Endothelial cell of umbilical vein (primary cell): ENCODE measurements at regions of chr3 and their contacts with region 1.

Region 1: DNA sequence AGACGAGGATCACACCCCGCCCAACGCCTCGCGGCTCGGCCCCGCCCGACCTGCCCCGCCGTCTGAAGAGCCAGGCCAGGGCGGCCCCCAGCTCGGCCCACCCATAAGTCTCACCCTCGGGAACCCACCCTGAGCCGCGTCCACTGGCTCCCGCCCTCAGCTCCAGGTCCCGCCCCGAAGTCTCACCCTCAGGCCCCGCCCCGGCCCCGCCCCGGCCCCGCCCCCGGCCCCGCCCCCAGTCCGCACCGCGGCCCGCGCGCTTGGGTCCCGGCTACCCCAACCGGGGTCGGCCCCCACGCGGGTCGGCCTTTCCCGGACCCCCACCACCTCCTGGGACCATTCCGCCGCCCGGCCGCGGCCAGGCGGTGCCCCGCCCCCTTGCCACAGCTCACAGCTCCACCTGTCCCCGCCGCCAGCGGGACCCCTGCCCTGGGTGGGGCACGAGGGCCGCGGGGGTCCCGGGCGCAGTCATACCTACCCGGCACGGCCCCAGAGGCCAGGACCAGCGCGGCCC is 489 bp downstream of the CSPG5 start:
- DNase-seq: no peak
- H3K4me3 ChIP-seq: peak overlapping the region; percentile 23 to 36 (median 24)
- H3K27ac ChIP-seq: no peak overlapping the region
- H3K4me1 ChIP-seq: no peaks in the 10 kb centered on the region
- H3K27me3 ChIP-seq: peaks cover 17% of the 10 kb centered on the region in 2 experiments
- CTCF ChIP-seq: no peak
- POLR2A ChIP-seq: no peak

Region 2: DNA sequence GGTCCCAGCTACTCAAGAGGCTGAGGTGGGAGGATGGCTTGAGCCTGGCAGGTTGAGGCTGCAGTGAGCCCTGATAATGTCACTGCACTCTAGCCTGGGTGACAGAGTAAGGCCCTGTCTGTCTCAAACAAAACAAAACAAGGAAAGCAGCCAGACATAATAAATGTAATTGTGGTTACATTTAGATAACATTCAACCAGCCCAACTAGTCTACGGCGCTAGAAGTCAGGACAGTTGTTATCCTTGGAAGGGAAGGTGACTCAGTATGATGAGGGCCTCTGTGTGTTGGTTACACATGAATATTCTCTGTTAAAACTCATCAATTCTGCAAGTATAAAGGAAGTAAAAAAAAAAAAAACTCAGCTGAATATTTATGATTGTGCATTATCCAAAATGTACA is 27.5 kb after region 1 on chr3:
- CTCF ChIA-PET with region 1: no interaction called
- POLR2A ChIA-PET with region 1: no interaction called
- dilution Hi-C with region 1: no loop called
- intact Hi-C with region 1: no loop called
- DNase-seq: peak; percentile 19
- H3K4me3 ChIP-seq: no peak overlapping the region
- H3K27ac ChIP-seq: no peak overlapping the region
- H3K4me1 ChIP-seq: peaks cover 5% of the 10 kb centered on the region
- H3K27me3 ChIP-seq: no peaks in the 10 kb centered on the region
- CTCF ChIP-seq: no peak
- POLR2A ChIP-seq: no peak

Region 3: GRCh38 chr3:47705391-47705790 is 127.2 kb after region 1 on chr3:
- CTCF ChIA-PET with region 1: no interaction called
- POLR2A ChIA-PET with region 1: interaction called, 10 read pairs
- dilution Hi-C with region 1: no loop called
- intact Hi-C with region 1: no loop called
- DNase-seq: no peak
- H3K4me3 ChIP-seq: no peak overlapping the region
- H3K27ac ChIP-seq: no peak overlapping the region
- H3K4me1 ChIP-seq: no peaks in the 10 kb centered on the region
- H3K27me3 ChIP-seq: no peaks in the 10 kb centered on the region
- CTCF ChIP-seq: no peak
- POLR2A ChIP-seq: no peak